ENCODE measurements at regions of chr7 and their contacts with region 1.

Region 1: DNA sequence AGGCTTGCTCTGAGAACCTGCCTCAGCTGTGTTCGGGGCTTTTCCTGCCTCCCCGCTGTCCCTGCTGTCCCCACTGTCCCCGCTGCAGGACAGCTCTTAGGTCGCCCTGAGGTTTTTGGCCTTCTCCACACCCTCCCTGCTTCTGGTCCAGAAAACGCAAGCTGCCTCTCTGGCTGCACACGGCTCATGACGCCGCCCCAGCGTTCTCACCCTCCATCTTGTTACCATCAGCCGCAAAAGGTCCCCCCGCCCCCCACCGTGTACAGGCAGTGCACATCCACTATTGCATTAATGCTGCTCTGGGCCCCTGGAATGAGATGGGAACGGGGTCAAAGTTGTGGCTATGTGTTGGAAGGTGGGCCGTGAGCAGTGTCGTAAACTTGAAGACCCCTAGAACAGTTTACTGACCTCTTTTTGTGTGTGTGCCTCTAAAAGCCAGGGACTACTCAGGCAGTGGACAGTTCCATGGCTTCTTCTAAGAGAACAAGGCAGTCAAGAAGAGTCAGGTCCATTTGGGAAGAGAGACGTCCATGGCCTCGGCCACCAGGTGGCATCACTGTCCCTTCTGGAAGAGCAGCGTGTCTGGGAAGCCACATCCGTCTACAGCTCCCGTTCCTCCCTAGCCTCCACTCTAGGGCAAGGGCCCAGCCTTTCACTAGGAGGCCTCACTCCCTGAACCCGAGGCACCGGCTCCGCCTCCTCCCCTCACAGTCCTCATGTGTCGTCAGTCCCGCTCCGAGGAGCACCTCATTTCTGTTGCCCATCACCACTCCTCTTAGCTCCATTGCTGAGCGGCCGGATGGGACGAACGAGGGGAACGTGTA is 38.5 kb upstream of the MKRN1 start:
- DNase-seq: peak; percentile 73
- ATAC-seq: peak; percentile 96
- H3K4me3 ChIP-seq: no peak overlapping the region; a peak in 1 of 6 replicates
- H3K27ac ChIP-seq: no peak overlapping the region
- H3K4me1 ChIP-seq: peaks cover 11% of the 10 kb centered on the region; the same call in 1 of the 2 replicates
- H3K27me3 ChIP-seq: peaks cover 0 to 14% of the 10 kb centered on the region in 2 experiments; a peak in 1 of 5 replicates
- CTCF ChIP-seq: peak; percentile 98
- EP300 ChIP-seq: no peak
- POLR2A ChIP-seq: no peak
- RAD21 ChIP-seq: peak; percentile 93

Region 2: DNA sequence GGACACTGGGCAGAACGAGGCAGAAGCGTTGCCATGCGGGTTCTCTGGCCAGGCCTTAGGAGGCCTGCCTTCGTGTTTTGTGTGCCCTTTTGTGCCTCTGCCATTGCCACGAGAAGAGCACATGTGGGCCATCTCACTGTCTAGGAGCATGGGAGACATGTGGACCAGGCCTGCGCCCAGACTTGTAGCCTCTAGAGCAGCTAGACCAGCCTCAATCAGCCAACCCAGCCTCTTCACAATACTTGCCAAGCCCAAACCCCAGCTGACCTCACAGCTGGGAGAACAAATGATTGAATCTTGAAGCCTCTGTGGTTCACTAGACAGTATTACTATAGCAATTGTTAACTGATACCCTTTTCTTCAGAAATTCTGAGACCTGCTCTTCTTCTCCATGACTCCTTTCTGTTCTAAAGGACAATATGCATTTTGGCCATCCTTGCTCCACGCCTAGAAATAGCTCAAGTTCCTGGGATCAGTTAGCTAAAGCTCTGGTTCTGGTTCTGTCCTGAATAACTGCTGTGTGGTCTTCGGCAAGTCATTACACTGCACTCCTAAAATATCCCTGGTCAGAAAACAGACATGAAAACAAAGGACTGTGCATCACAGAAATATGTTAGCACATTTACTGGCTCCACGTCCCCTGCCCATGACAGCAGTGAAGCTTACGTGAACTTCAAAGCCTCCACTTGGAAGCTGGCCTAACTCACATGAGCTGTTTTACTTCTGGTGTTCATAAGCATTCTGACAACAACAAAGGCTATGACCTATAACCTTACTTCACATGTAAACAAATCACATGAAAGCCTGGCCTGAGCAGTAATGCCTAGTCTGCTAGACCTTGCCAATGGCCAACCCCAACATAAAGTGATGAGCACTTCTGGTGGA is 33.8 kb after region 1 on chr7:
- CTCF ChIA-PET with region 1: no interaction called
- POLR2A ChIA-PET with region 1: no interaction called
- in situ Hi-C with region 1: no loop called
- intact Hi-C with region 1: no loop called
- DNase-seq: peak; percentile 63
- ATAC-seq: peak; percentile 80
- H3K4me3 ChIP-seq: no peak overlapping the region
- H3K27ac ChIP-seq: peak overlapping the region; percentile 4
- H3K4me1 ChIP-seq: peaks cover 27% of the 10 kb centered on the region
- H3K27me3 ChIP-seq: 0 out of 5 replicates have a peak, but pooled peaks cover 0 to 2% of the 10 kb centered on the region in 2 experiments
- CTCF ChIP-seq: no peak
- EP300 ChIP-seq: no peak
- POLR2A ChIP-seq: no peak
- RAD21 ChIP-seq: no peak

Region 3: DNA sequence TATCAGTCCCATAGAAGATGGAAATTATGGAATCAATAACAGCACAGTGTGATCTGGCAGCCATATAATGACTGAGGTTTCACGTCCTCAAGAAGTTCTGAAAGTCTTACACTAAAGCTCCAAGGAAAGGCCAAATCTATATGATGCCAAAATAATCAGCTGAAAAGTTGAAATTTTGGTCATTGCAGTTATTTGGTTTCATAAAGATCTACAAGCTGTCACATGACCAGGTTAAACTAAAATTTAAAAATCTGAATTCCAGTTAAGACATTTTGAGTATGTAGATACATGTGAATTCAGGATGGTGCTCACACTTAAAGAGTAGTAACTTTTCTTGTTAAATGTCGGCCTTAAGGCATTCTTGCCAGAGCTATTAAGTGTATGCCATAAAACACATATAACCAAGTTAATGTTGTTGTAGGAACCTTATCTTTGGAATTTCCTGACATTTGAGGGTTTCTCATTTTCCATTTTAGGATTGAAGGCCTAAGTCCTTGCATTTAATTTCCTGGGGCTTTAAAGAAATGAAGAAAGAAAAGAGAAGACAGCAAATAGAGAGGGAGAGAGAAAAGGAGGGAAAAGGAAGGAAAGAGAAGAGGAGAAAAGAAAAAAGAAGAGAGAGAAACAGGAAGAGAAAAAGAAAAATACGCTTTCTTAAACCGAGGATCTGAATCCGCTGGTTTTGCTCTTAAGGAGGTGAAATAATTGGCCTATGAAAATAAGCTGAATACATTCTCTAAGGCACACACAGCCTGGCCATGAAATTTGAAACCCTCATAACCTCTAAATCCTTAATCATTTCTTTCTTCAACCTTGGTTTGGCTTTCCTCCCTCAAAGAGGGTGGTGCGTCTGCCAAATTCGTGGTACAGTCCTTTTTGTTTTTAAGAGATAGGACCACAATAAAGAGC is 79.0 kb after region 1 on chr7:
- CTCF ChIA-PET with region 1: interaction called, 9 read pairs
- POLR2A ChIA-PET with region 1: no interaction called
- in situ Hi-C with region 1: loop called (anchors 5 kb)
- intact Hi-C with region 1: loop called (anchors 1 kb)
- DNase-seq: no peak
- ATAC-seq: no peak
- H3K4me3 ChIP-seq: no peak overlapping the region
- H3K27ac ChIP-seq: no peak overlapping the region
- H3K4me1 ChIP-seq: no peaks in the 10 kb centered on the region
- H3K27me3 ChIP-seq: peaks cover 0 to 9% of the 10 kb centered on the region in 2 experiments; a peak in 2 of 5 replicates
- CTCF ChIP-seq: no peak
- EP300 ChIP-seq: no peak
- POLR2A ChIP-seq: no peak
- RAD21 ChIP-seq: no peak

Region 4: GRCh38 chr7:140653319-140654108 is 135.8 kb after region 1 on chr7:
- CTCF ChIA-PET with region 1: interaction called, 83 read pairs
- POLR2A ChIA-PET with region 1: no interaction called
- in situ Hi-C with region 1: loop called (anchors 5 kb)
- intact Hi-C with region 1: loop called (anchors 1 kb)
- DNase-seq: peak; percentile 61
- ATAC-seq: peak; percentile 76
- H3K4me3 ChIP-seq: no peak overlapping the region
- H3K27ac ChIP-seq: no peak overlapping the region
- H3K4me1 ChIP-seq: peaks cover 26% of the 10 kb centered on the region
- H3K27me3 ChIP-seq: peaks cover 0 to 14% of the 10 kb centered on the region in 2 experiments; a peak in 3 of 5 replicates
- CTCF ChIP-seq: peak; percentile 93
- EP300 ChIP-seq: no peak
- POLR2A ChIP-seq: no peak
- RAD21 ChIP-seq: peak; percentile 85